ENCODE measurements at regions of chr22 and their contacts with region 1.

Region 1: GRCh38 chr22:29625090-29625825 is 21.8 kb downstream of the NF2 start:
- DNase-seq: no peak
- ATAC-seq: peak; percentile 50
- H3K4me3 Mint-ChIP-seq: no peak overlapping the region
- H3K27ac Mint-ChIP-seq: no peak overlapping the region
- H3K4me1 Mint-ChIP-seq: peaks cover 46% of the 10 kb centered on the region
- H3K27me3 Mint-ChIP-seq: no peaks in the 10 kb centered on the region
- CTCF ChIP-seq: peak; percentile 97

Region 2: GRCh38 chr22:29609139-29609538 is 16.1 kb before region 1 on chr22:
- CTCF ChIA-PET with region 1: interaction called, 9 read pairs
- POLR2A ChIA-PET with region 1: interaction called, 6 read pairs
- intact Hi-C with region 1: loop called (anchors 2 kb)
- DNase-seq: no peak
- ATAC-seq: no peak
- H3K4me3 Mint-ChIP-seq: no peak overlapping the region
- H3K27ac Mint-ChIP-seq: no peak overlapping the region
- H3K4me1 Mint-ChIP-seq: peaks cover 19% of the 10 kb centered on the region
- H3K27me3 Mint-ChIP-seq: no peaks in the 10 kb centered on the region
- CTCF ChIP-seq: no peak

Region 3: DNA sequence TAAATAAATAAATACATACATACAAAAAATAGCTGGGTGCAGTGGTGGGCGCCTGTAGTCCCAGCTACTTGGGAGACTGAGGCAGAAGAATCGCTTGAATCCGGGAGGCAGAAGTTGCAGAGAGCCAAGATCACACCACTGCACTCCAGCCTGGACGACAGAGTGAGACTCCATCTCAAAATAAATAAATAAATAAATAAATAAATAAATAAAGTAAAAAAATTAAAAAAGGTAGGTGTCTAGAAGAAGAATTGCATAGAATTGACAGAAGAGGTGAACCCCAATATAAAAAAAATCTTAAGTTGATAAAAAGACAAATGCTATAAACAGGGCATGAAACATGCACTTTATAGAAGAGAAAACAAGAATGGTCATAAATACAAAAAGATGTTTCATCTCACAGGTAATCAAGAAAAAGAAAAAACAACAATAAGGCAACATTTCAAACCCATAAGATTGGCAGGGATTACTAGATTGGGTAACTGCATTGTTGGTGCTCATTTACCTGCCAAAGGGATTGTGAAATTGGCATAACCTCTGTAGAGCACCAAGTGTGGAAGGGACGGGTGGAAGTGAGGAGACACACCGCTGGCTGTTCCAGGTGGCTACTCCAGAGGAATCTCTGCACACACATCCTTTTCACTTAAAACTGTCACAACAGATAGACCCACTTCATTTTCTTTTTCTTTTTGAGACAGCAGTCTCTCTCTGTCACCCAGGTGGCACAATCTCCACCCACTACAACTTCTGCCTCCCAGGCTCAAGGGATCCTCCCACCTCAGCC is 22.9 kb after region 1 on chr22:
- CTCF ChIA-PET with region 1: no interaction called
- POLR2A ChIA-PET with region 1: no interaction called
- intact Hi-C with region 1: no loop called
- DNase-seq: no peak
- ATAC-seq: no peak
- H3K4me3 Mint-ChIP-seq: no peak overlapping the region
- H3K27ac Mint-ChIP-seq: no peak overlapping the region
- H3K4me1 Mint-ChIP-seq: no peaks in the 10 kb centered on the region
- H3K27me3 Mint-ChIP-seq: no peaks in the 10 kb centered on the region
- CTCF ChIP-seq: no peak

Measured in activated B cell treated with CpG ODN at 0.5 μM for 24 hours (primary cell).